K562 (cell line): ENCODE measurements at regions of chr2 and their contacts with region 1.

Region 1: GRCh38 chr2:108448678-108449493 is at the start of gene GCC2:
- DNase-seq: peak; percentile 89 to 97 (median 91)
- ATAC-seq: peak; percentile 96
- H3K4me3 ChIP-seq: peak within 1 kb of the TSS; percentile 92
- H3K27ac ChIP-seq: peak within 1 kb of the TSS; percentile 87
- H3K4me1 ChIP-seq: peaks cover 11 to 22% of the 10 kb centered on the region in 2 experiments; a peak in 4 of 5 replicates
- H3K27me3 ChIP-seq: no peaks in the 10 kb centered on the region
- CTCF ChIP-seq: 0 out of 6 replicates have a peak, but pooled peaks of 1 of the 3 experiments have one; percentile 0
- EP300 ChIP-seq: peak; percentile 22; the same call in 1 of the 2 replicates
- POLR2A ChIP-seq: peak; percentile 87
- RAD21 ChIP-seq: 0 out of 4 replicates have a peak, but pooled peaks of 1 of the 2 experiments have one; percentile 17
- polyA plus RNA-seq, gene GCC2: 11.4 to 19.5 TPM

Region 2: DNA sequence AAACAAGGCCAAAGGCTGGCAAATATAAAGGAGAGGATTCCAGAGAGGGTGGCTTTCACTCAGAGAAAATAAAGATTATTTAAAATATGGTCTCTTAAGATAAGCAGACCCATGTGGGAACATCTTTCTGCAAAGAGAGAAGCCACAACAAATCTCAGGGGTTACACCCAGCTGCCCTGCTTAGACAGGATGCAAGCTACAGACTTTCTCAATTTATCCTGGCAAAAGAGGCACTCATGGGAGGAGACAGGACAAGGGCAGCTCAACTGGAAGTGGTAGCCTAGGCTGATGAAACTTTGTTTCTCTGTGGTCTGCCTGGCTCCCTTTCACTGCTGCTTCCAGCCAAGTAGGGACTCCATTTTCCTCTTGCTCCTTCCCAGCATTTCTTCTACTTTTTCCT is 97.0 kb before region 1 on chr2:
- CTCF ChIA-PET with region 1: no interaction called
- POLR2A ChIA-PET with region 1: no interaction called
- in situ Hi-C with region 1: no loop called
- intact Hi-C with region 1: loop called (anchors 10 kb)
- DNase-seq: peak in 2 of 4 experiments; percentile 33 to 36
- ATAC-seq: no peak
- H3K4me3 ChIP-seq: no peak overlapping the region
- H3K27ac ChIP-seq: no peak overlapping the region
- H3K4me1 ChIP-seq: peaks cover 3 to 17% of the 10 kb centered on the region in 2 experiments; a peak in 3 of 5 replicates
- H3K27me3 ChIP-seq: no peaks in the 10 kb centered on the region
- CTCF ChIP-seq: no peak
- EP300 ChIP-seq: no peak
- POLR2A ChIP-seq: no peak
- RAD21 ChIP-seq: no peak

Region 3: DNA sequence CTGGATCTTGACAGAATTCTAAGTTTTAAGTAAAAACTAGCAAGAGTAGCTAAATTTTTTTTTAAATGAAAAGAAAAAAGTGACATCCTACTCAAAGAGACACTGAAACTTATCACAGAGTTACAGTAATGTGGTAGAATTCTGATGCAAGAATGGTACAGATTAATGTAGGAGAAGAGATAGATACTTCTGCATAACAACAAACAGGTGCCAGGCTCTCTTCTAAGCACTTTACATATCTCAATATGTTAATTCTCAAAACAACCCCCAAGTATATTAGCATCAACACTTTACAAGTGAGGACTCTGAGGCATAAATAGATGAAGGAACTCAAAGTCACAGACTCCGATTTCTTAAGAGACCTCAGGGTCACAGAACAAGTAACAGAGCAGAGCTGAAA is 28.2 kb after region 1 on chr2:
- CTCF ChIA-PET with region 1: no interaction called
- POLR2A ChIA-PET with region 1: no interaction called
- in situ Hi-C with region 1: no loop called
- intact Hi-C with region 1: no loop called
- DNase-seq: no peak
- ATAC-seq: no peak
- H3K4me3 ChIP-seq: no peak overlapping the region
- H3K27ac ChIP-seq: no peak overlapping the region
- H3K4me1 ChIP-seq: no peaks in the 10 kb centered on the region
- H3K27me3 ChIP-seq: no peaks in the 10 kb centered on the region
- CTCF ChIP-seq: no peak
- EP300 ChIP-seq: no peak
- POLR2A ChIP-seq: no peak
- RAD21 ChIP-seq: no peak

Region 4: DNA sequence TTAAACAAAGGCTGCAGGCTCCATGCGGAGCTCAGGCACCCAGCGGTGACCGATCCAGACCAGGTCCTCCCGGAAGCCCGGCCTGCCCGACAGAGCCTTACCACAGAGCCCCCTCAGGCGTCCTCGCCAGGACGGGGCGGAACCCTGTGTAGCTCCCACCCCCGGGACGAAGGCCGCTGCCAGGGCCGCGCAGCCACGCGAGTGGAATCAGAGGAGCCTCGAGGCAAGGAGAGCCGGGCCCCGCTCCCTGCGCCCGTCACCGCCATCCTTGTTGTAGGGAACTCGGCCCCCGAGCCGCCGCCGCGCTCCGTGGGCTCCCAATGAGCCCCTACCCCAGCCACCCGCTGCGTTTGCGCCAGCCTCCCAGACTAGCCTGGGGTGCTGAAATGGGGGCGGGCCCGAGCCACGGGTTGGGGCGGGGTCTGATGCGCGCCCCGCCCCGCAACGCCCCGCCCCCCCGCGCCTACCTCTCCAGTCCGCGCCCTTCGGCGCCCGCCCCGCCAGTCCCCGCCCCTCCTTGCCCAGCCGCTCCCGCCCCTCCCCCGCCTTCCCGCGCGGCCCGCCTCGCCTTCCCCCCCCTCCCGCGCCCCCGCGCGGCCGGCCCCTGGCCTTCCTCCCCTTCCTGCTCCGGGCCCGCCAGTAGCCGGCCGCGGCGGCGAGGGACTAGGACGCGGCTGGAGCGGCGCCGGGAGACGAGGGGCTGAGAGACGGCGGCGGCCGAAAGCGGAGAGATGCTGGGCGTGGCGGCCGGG is 85.1 kb after region 1 on chr2 and contains the start of gene LIMS1:
- CTCF ChIA-PET with region 1: no interaction called
- POLR2A ChIA-PET with region 1: interaction called, 4 read pairs
- in situ Hi-C with region 1: no loop called
- intact Hi-C with region 1: loop called (anchors 1 kb)
- DNase-seq: peak; percentile 88 to 97 (median 95)
- ATAC-seq: peak; percentile 90
- H3K4me3 ChIP-seq: peak within 1 kb of the TSS; percentile 86
- H3K27ac ChIP-seq: peak within 1 kb of the TSS; percentile 93
- H3K4me1 ChIP-seq: peaks cover 23 to 25% of the 10 kb centered on the region in 2 experiments
- H3K27me3 ChIP-seq: no peaks in the 10 kb centered on the region
- CTCF ChIP-seq: peak in 1 of 3 experiments; percentile 12; a peak in 1 of 6 replicates
- EP300 ChIP-seq: no peak
- POLR2A ChIP-seq: peak; percentile 96
- RAD21 ChIP-seq: no peak
- polyA plus RNA-seq, gene LIMS1: 52.8 to 81.0 TPM